ENCODE measurements at regions of chr6 and their contacts with region 1.

Region 1: DNA sequence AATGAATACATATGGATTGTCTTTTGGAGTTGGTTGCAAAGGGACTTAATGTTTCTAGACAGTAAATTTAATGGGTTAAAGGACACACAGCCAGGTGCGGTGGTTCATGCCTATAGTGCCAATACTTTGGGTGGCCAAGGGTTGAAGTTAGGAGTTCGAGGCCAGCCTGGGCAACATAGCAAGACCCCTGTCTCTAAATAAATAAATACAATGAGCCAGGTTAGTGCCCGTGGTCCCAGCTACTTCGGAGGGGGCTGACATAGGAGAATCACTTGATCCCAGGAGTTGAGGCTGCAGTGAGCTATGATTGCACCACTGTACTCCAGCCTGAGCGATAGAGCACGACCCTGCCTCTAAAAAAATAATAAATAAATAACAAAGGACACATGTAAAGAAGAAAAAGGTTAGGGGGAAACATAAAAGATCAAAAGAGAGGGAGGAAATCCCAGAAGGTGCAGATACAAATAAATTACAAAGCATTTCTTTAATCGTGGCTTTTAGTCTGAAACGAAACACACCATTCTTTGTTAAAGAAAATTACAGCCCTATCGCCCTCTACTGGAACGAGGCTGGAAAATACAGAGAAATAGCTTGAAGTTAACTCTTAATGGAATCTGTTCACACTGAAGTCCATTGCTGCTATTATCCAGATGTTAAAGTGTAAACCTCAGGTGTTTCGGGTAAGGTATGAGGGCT is 42.6 kb upstream of the SCML4 start:
- DNase-seq: no peak
- H3K4me3 Mint-ChIP-seq: no peak overlapping the region
- H3K27ac Mint-ChIP-seq: no peak overlapping the region
- H3K4me1 Mint-ChIP-seq: peaks cover 24% of the 10 kb centered on the region
- H3K27me3 Mint-ChIP-seq: peaks cover 4% of the 10 kb centered on the region

Region 2: GRCh38 chr6:106927531-106928398 is 939.0 kb before region 1 on chr6:
- intact Hi-C with region 1: no loop called
- DNase-seq: no peak
- H3K4me3 Mint-ChIP-seq: no peak overlapping the region
- H3K27ac Mint-ChIP-seq: no peak overlapping the region
- H3K4me1 Mint-ChIP-seq: no peaks in the 10 kb centered on the region
- H3K27me3 Mint-ChIP-seq: peaks cover 22% of the 10 kb centered on the region

Region 3: GRCh38 chr6:107704347-107705013 is 162.3 kb before region 1 on chr6:
- intact Hi-C with region 1: loop called (anchors 1 kb)
- DNase-seq: no peak
- H3K4me3 Mint-ChIP-seq: no peak overlapping the region
- H3K27ac Mint-ChIP-seq: no peak overlapping the region
- H3K4me1 Mint-ChIP-seq: peaks cover 15% of the 10 kb centered on the region
- H3K27me3 Mint-ChIP-seq: peaks cover 1% of the 10 kb centered on the region

Region 4: GRCh38 chr6:107800564-107801164 is 66.1 kb before region 1 on chr6:
- intact Hi-C with region 1: loop called (anchors 1 kb)
- DNase-seq: no peak
- H3K4me3 Mint-ChIP-seq: no peak overlapping the region
- H3K27ac Mint-ChIP-seq: no peak overlapping the region
- H3K4me1 Mint-ChIP-seq: peaks cover 11% of the 10 kb centered on the region
- H3K27me3 Mint-ChIP-seq: peaks cover 13% of the 10 kb centered on the region

Region 5: GRCh38 chr6:107841275-107841670 is 25.5 kb before region 1 on chr6:
- intact Hi-C with region 1: no loop called
- DNase-seq: no peak
- H3K4me3 Mint-ChIP-seq: no peak overlapping the region
- H3K27ac Mint-ChIP-seq: no peak overlapping the region
- H3K4me1 Mint-ChIP-seq: peaks cover 23% of the 10 kb centered on the region
- H3K27me3 Mint-ChIP-seq: peaks cover 5% of the 10 kb centered on the region

Region 6: DNA sequence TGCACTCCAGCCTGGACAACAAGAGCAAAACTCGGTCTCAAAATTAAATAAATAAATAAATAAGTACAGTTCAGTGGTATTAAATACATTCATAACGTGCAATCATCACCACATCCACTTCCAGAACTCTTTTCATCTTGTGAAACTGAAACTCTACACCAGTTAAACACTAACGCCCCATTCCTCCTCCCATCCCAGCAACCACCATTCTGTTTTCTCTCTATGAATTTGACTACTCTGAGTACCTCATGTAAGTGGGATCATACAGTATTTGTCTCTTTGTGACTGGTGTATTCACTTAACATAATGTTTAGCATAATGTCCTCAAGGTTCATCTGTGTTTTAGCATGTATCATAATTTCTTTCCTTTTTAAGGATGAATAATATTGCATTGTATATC is 13.5 kb before region 1 on chr6:
- intact Hi-C with region 1: loop called (anchors 1 kb)
- DNase-seq: no peak
- H3K4me3 Mint-ChIP-seq: no peak overlapping the region
- H3K27ac Mint-ChIP-seq: no peak overlapping the region
- H3K4me1 Mint-ChIP-seq: peaks cover 10% of the 10 kb centered on the region
- H3K27me3 Mint-ChIP-seq: peaks cover 12% of the 10 kb centered on the region

Measured in activated T-helper 1 cell treated with anti-CD3 and anti-CD28 coated beads, Interleukin-12 subunit alpha, Interleukin-12 subunit beta, Interleukin-2, Interleukin-4 antibody, amounts not matched to agents 30 ng/mL and 10 ng/mL and 1 ng/mL, durations not matched to agents 14 hours and 24 hours and 36 hours (primary cell).